ENCODE measurements at regions of chr3 and their contacts with region 1.

Region 1: DNA sequence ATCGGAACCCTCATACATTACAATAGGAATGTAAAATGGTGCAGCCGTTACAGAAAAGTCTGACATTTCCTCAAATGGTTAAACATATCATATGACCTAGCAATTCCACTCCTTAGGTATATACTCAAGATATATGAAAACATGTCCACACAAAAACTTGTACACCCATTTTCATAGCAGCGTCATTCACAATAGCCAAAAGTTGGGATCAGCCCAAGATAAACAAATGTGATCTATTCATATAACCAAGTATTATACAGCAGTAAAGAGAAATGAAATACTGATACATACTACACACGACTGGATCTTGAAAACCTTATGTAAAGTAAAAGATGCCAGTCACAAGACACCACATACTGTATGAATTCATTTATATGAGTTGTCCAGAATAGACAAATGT is 102.4 kb downstream of the MSL2 start:
- DNase-seq: no peak
- H3K4me3 ChIP-seq: no peak overlapping the region
- H3K27ac ChIP-seq: no peak overlapping the region
- H3K4me1 ChIP-seq: no peaks in the 10 kb centered on the region
- H3K27me3 ChIP-seq: no peaks in the 10 kb centered on the region
- CTCF ChIP-seq: no peak
- POLR2A ChIP-seq: no peak

Region 2: DNA sequence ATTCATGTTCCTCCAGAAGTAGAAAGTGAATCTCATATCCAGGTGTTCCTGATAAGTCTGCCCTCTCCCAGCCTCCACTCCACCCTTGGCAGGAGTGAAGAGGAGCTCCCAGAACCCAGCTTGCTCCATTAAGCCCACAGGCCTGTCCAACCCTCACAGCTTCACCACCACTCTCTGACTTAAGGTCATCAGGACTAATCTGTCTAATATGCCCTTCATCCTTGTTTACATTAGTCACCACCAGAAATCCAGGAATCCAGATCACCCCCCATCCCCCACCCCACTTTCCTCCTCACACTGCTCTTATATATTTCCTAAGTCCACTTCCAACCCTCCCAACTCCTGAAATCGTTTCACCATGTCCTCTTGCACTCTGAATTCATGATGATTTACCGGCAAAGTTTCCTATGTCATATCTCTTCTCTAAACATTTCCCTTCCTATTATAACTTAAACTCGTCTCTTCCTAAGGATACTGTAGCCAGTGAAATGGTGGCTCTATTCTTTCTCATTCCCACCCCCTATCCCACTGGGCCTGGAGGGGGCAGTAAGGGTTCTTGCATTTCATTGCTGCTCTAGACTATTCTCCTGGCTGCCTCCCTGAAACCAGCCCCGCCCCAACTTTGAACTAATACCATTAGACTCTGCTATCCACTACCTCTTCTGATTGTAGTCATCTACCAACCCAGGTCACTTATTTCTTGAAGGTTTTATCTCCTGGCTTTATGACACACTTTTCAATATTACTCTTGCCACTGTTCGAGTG is 84.9 kb before region 1 on chr3:
- intact Hi-C with region 1: no loop called
- DNase-seq: no peak
- H3K4me3 ChIP-seq: no peak overlapping the region
- H3K27ac ChIP-seq: no peak overlapping the region
- H3K4me1 ChIP-seq: no peaks in the 10 kb centered on the region
- H3K27me3 ChIP-seq: no peaks in the 10 kb centered on the region
- CTCF ChIP-seq: no peak
- POLR2A ChIP-seq: no peak

Region 3: DNA sequence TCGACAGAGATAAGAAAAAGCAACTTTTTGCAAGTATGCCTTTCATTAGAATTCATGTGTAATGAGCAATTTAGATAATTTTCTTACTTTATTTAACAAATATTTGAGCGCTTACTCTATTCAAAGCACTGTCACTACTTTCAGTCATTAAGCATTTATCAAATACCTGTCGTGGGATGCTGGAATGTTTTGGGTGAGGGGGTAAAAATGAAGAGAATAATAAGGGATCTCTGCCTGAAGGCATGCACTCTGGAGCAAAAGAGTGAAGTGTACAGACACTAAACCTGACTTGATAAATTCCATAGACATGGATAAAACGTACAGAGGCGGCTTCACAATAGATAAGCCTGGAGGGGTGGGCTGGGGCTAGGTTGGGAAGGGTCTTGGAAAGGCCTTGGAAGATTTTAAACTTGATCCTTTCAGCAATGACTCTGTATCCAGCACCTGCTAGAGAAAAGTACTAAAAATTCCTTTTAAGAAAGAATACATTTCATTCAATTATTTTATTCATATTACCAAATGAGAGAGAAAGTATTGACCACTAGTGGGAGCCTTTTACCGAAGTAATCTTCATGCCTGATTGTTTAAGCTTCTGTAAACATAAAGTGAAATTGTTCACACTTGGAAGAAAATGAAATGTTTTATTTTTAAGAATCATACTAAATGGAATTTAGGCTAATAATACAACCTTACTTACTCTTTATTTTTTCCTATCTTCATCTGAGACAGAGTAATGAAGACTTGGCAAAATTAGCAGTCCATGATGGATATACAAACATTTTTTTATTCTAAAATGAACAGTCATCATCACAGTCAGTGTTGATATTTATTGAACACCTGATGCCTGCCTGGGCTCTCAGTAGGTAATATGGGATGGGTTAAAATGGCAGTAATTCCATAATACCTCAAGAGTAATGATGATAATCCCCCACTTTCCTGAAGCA is 15.1 kb before region 1 on chr3:
- intact Hi-C with region 1: no loop called
- DNase-seq: no peak
- H3K4me3 ChIP-seq: no peak overlapping the region
- H3K27ac ChIP-seq: no peak overlapping the region
- H3K4me1 ChIP-seq: no peaks in the 10 kb centered on the region
- H3K27me3 ChIP-seq: no peaks in the 10 kb centered on the region
- CTCF ChIP-seq: peak in 2 of 3 donors; percentile 52 to 58
- POLR2A ChIP-seq: no peak

Region 4: DNA sequence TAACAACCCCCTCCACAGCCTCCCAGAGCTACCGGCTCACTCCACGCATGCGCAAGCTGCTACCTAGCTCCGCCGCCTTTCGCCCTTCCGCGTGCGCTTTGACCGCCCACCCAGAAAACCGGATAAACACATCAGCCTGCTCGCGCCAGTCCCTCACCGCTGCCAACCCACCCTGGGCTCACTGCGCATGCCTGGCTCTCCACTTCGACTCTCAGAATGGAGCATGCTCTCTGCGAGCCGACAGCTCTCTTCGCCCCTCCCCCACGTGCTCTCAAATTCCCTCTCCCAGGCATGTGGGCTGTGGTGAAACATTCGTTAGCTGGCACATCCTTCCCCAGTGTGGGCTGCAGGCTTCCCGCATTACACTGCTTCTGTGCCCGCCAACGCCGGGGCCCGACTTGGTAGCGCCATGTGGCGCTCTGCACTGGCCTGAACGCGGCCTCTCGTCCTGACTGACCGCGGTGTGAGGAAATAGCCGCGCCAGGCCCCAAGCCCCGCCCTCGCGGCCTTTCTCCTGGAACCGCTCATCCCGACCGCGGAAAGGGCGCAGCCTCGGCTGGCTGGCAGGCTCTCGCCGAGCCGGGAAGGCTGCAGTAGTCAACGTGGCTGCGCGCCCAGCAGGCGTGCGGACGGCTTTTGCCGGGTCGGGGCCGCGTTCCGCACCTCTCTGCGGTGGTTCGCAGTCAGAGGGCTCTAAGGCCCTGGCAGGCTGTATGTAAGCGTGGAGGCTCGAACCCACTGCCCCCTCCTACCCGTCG is 102.8 kb after region 1 on chr3:
- intact Hi-C with region 1: loop called (anchors 5 kb)
- DNase-seq: peak; percentile 98
- H3K4me3 ChIP-seq: peak overlapping the region; percentile 75 to 99 (median 88)
- H3K27ac ChIP-seq: peak overlapping the region; percentile 100
- H3K4me1 ChIP-seq: peaks cover 0 to 3% of the 10 kb centered on the region in 2 donors
- H3K27me3 ChIP-seq: no peaks in the 10 kb centered on the region
- CTCF ChIP-seq: no peak
- POLR2A ChIP-seq: peak; percentile 51

Region 5: DNA sequence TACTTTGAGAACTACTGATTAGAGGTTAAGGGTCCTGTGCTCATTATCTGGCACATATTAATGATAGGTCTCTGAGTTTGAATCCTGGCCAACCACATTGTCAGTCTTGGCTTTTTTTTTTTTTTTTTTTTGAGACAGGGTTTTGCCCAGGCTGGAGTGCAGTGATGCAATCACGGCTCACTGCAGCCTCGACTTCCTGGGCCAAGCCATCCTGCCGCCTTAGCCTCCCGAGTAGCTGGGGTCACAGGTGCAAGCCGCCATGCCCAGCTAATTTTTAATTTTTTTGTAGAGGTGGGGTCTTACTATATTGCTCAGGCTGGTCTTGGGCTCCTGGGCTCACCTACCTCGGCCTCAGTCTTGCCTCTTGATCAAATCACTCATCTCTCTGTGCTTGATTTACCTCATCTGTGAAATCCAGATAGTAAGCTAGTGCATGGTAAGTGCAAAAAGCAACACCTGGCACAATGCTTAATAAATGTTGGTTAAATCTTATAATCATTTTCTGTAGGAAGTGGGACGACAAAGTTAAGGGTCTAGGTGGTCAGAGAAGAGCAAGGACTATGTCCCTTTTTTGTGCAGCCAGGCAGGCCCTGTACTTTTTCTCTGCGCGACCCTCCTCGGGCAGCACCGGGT is 155.9 kb after region 1 on chr3:
- intact Hi-C with region 1: loop called (anchors 10 kb)
- DNase-seq: no peak
- H3K4me3 ChIP-seq: peak overlapping the region; percentile 56 to 81 (median 66)
- H3K27ac ChIP-seq: peak overlapping the region; percentile 89 to 92
- H3K4me1 ChIP-seq: peaks cover 0 to 10% of the 10 kb centered on the region in 2 donors
- H3K27me3 ChIP-seq: no peaks in the 10 kb centered on the region
- CTCF ChIP-seq: no peak
- POLR2A ChIP-seq: no peak

Region 6: DNA sequence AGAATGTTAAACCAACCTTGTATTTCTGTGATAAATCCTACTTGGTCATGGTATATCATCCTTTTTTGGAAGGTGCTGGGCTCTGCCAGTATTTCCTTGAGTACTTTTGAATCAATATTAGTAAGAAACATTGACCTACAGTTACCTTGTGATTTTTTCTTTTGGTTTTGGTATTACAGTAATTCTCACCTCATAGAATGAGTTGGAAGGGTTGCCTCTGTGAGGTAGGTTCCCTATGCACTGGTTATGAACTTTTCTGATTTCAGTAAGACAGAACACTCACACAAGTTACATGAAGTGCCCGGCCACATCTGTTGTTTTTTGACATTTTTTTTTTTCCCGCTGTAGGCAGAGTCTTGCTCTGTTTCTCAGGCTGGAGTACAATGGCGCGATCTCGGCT is 176.4 kb after region 1 on chr3:
- intact Hi-C with region 1: no loop called
- DNase-seq: no peak
- H3K4me3 ChIP-seq: no peak overlapping the region
- H3K27ac ChIP-seq: no peak overlapping the region
- H3K4me1 ChIP-seq: no peaks in the 10 kb centered on the region
- H3K27me3 ChIP-seq: no peaks in the 10 kb centered on the region
- CTCF ChIP-seq: no peak
- POLR2A ChIP-seq: no peak

Measured in breast epithelium (tissue), 4 donors.